Vagina (tissue), 2 donors: ENCODE measurements at regions of chr3 and their contacts with region 1.

Region 1: DNA sequence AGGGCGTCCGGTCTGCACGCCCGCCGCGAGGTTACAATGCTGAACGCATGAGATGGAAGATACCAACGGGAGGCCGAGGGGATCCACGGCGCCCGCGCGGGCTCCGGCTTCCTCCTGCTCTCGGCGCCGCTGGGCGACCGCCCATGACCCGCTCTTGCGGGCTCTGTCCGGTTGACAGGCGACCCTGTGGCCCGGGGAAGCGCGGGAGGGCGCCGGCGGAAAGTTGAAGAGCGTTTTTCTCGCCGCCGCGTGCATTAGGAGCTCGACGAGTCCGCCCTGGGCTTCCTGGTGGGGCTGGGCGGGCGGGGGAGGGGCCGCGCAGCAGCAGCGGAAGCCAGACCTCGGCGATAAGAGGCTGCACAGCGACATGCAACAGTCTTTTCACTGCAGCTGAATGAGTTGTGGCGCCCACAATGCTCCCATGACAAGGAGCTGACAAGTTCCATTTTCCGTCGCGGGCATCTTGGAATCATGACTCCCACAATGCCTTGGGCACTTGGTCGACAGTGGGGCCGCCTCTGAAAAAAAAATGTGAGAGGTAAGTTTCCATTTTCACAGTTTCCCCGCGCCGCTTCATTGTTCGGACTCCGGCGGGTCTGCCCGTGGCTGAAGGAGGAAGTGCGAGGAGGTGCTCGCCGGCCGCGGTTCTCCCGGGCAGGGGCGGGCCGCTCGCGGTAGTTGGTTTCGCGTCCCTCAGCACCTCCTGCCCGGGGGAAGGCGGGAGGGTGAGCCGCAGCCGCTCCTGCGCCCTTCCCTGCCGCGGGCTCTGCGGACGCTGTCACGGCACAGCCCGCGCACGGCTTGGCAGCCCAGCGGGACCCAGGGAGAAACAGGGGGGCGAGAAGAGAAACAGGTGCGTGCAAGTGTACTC is at the start of gene MBNL1:
- DNase-seq: peak in 1 of 2 donors; percentile 93
- H3K4me3 ChIP-seq: peak within 1 kb of the TSS; percentile 74 to 94
- H3K27ac ChIP-seq: peak within 1 kb of the TSS; percentile 98
- H3K4me1 ChIP-seq: peaks cover 49% of the 10 kb centered on the region
- H3K27me3 ChIP-seq: no peaks in the 10 kb centered on the region
- CTCF ChIP-seq: no peak
- POLR2A ChIP-seq: peak in 1 of 2 donors; percentile 51
- total RNA-seq, gene MBNL1: 311 TPM

Region 2: DNA sequence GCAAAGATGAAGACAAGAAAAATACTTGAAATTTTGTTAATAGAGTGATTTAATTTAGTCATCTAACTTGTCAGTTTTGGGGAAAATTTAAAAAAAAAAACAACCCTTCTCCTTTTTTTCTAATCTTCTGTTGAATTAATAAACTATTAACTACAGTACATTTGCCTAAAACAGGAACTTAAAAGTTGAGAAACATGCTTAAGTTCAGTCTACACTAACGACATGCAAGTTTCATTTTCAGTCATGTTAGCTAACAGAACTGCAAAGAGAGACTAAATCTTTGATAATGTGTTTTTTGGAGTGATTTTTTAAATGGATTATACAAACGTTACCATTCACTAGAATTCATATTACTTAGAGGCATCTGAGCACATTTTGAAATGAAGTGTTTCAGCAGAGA is 72.0 kb before region 1 on chr3:
- intact Hi-C with region 1: loop called (anchors 2 kb)
- DNase-seq: no peak
- H3K4me3 ChIP-seq: no peak overlapping the region
- H3K27ac ChIP-seq: peak overlapping the region; percentile 81
- H3K4me1 ChIP-seq: peaks cover 28% of the 10 kb centered on the region
- H3K27me3 ChIP-seq: no peaks in the 10 kb centered on the region
- CTCF ChIP-seq: no peak
- POLR2A ChIP-seq: no peak

Region 3: DNA sequence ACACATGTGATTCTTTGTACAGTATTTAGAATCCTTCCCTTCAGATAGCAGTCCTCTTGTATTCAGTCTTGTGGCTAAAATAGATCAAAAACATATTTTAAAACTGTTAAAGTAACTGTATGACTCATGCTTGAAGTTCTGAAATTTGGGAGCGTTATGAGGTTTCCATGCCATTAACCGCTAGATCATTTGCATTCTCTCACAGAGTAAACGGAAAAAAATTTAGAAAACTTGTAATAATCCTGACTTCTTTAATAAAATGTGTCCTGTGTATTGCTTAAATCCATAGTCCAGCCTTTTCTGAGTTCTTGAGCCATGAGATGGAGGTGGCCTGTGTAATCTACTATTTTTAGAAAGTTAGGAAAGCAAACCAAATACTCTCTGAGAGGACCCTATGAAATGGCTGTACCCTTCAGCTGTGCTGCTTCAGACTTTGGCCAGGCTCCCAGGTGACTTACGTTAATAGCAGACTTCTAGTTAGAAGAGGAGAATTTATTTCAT is 33.8 kb after region 1 on chr3:
- intact Hi-C with region 1: loop called (anchors 5 kb)
- DNase-seq: no peak
- H3K4me3 ChIP-seq: no peak overlapping the region
- H3K27ac ChIP-seq: peak overlapping the region; percentile 64
- H3K4me1 ChIP-seq: peaks cover 98% of the 10 kb centered on the region
- H3K27me3 ChIP-seq: no peaks in the 10 kb centered on the region
- CTCF ChIP-seq: no peak
- POLR2A ChIP-seq: no peak

Region 4: GRCh38 chr3:152356870-152357276 is 88.1 kb after region 1 on chr3:
- intact Hi-C with region 1: no loop called
- DNase-seq: no peak
- H3K4me3 ChIP-seq: no peak overlapping the region
- H3K27ac ChIP-seq: no peak overlapping the region
- H3K4me1 ChIP-seq: peaks cover 46% of the 10 kb centered on the region
- H3K27me3 ChIP-seq: no peaks in the 10 kb centered on the region
- CTCF ChIP-seq: no peak
- POLR2A ChIP-seq: no peak

Region 5: DNA sequence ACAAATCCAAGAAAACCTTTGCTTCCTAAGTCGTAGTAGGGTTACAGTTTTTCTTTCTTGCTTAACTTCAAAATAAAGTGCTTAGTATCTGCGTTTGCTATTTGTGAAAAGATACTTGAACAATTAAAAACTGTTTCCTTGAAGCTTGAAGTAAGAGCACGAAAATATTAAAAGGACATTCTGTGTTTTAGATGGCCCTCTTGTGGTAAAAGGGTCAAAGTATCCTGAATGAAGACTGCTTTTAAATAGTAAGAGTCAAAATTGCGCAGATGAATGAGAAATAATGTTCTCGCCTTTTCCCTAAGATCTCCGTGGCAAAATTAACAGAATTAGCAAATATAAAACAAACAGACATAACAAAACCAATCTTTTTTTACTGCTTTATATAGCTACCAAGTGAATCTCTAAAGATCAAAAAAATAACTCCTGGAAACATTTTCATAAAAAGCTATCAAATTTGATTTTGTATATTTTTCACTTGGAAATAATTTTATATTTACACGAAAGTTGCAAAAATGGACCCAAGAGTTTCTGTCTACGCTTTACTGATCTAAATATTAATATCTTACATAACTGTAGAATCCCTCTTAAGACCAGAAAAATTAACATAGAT is 175.3 kb after region 1 on chr3:
- intact Hi-C with region 1: loop called (anchors 5 kb)
- DNase-seq: no peak
- H3K4me3 ChIP-seq: no peak overlapping the region
- H3K27ac ChIP-seq: peak overlapping the region; percentile 23
- H3K4me1 ChIP-seq: peaks cover 55% of the 10 kb centered on the region
- H3K27me3 ChIP-seq: no peaks in the 10 kb centered on the region
- CTCF ChIP-seq: peak; percentile 34 to 80 (median 43)
- POLR2A ChIP-seq: no peak